Activated CD8-positive, alpha-beta T cell treated with anti-CD3 and anti-CD28 coated beads for 36 hours (primary cell): ENCODE measurements at regions of chr11 and their contacts with region 1.

Region 1: DNA sequence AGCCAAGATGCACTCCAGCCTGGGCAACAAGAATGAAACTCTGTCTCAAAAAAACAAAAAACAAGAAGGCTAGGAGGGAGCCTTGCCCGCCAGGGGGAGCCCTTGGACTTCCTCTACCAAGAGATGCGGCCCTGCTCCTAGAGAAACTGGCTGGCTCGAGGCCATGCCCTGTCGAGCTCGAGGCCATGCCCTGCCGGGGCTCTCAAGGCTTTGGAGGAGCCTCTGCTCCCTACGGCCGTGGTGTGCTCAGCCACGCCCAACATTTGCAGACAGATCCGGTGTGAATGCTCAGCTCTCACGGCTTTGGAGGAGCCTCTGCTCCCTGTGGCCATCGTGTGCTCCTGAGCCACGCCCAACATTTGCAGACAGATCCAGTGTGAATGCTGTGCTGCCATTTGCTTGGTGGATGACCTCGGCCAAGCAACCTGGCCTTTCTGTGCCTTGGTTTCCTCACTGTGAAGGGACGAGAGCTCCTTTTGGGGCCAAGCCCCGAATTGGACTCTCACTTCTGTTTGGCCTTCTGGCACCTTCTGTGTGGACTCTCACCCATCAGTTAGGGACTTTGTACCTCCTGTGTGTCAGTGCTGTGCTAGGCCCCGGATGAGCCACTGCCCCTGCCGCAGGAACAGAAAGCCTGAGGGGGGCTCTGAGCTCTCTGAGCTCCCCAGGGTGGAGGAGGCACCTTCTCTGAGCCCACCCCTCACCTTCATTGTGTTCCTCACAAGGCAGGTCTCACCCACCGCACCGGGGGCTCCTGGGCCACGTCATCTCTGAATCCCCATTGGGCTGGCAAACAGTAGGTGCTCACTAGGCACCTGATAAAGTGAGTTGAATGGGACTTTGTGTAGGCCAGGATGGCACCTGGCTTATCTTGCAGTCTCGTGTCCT is 14.1 kb downstream of the C11orf24 start:
- DNase-seq: peak; percentile 99
- ATAC-seq: peak; percentile 95
- H3K4me3 Mint-ChIP-seq: no peak overlapping the region
- H3K27ac Mint-ChIP-seq: no peak overlapping the region
- H3K4me1 Mint-ChIP-seq: peaks cover 3% of the 10 kb centered on the region
- H3K27me3 Mint-ChIP-seq: no peaks in the 10 kb centered on the region
- CTCF ChIP-seq: peak; percentile 84

Region 2: DNA sequence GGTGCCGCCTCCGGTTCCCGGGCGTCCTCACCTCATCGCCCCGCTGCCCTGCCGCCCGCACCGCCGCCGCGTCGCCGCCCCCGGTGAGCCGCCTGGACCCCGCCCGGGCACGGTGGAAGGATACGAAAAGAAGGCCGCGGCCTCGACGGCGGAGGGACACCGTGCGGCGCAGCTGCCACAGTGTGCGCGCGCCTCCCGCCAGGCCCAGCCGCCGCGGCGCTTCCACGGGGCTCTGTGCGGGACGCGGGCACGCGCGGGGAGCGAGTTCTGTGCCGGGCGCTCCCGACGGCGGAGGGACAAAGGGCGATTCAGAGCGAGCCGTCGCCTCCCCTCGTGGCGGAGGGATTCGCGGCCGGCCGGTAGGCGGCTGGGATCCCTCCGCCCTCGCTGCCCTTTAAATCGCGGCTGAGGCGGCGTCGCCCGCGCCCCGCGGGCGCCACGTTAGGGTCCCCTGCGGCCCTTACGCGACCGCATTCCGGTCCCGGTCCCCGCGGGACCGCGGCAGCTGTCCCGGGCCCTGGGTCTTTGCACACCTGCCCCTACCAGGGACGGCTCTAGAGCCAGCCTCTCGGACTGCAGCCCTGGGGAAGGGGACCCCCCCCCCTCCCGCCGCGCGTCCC is 44.1 kb before region 1 on chr11:
- CTCF ChIA-PET with region 1: no interaction called
- POLR2A ChIA-PET with region 1: no interaction called
- intact Hi-C with region 1: no loop called
- DNase-seq: peak; percentile 78
- ATAC-seq: peak; percentile 53
- H3K4me3 Mint-ChIP-seq: peak overlapping the region; percentile 55
- H3K27ac Mint-ChIP-seq: no peak overlapping the region
- H3K4me1 Mint-ChIP-seq: peaks cover 41% of the 10 kb centered on the region
- H3K27me3 Mint-ChIP-seq: peaks cover 9% of the 10 kb centered on the region
- CTCF ChIP-seq: no peak

Region 3: DNA sequence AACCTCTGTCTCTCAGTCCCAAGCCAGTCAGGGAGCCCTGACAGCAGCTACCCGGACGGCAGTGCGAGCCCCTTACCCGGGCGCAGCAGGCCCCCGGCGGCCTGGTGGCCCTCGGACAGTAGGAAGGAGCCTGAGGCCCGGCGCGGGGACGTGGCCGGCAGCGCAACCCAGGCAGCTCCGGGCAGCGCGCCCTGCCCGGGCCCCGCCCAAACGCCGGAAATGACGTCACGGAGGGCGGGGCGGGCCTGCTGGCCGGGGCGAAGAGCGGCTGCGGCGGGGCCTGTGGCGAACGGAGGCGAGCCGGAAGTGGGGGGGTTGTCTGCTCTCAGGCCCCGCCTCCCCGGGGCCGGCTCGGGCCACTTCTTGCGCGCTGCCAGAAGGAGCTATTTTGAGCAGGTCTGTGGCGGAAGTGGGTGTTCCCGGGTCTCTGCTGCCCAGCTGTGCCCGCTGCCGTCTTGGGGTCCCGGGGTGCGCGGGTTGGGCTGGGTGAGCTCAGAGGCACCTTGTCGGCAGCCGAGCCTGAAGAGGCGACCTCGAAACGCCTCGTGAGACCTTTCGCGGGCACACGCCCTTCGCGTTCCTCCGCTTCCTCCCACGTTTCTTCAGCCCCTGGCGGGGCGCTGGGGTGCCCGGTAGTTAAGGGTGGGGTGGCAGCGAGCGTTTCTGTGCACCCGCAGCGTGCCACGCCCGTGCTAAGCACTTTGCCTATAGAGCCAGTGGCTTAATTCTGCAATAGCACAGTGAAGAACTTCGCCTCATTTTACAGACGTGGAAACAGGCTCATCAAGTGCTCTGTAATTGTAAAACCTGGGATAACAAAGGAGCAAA is 14.3 kb after region 1 on chr11 and contains the start of gene C11orf24:
- CTCF ChIA-PET with region 1: interaction called, 28 read pairs
- POLR2A ChIA-PET with region 1: interaction called, 11 read pairs
- intact Hi-C with region 1: no loop called
- DNase-seq: peak; percentile 94
- ATAC-seq: peak; percentile 96
- H3K4me3 Mint-ChIP-seq: peak within 1 kb of the TSS; percentile 82
- H3K27ac Mint-ChIP-seq: peak within 1 kb of the TSS; percentile 90
- H3K4me1 Mint-ChIP-seq: peaks cover 29% of the 10 kb centered on the region
- H3K27me3 Mint-ChIP-seq: no peaks in the 10 kb centered on the region
- CTCF ChIP-seq: no peak
- total RNA-seq, gene C11orf24: 38.0 to 40.7 TPM

Region 4: DNA sequence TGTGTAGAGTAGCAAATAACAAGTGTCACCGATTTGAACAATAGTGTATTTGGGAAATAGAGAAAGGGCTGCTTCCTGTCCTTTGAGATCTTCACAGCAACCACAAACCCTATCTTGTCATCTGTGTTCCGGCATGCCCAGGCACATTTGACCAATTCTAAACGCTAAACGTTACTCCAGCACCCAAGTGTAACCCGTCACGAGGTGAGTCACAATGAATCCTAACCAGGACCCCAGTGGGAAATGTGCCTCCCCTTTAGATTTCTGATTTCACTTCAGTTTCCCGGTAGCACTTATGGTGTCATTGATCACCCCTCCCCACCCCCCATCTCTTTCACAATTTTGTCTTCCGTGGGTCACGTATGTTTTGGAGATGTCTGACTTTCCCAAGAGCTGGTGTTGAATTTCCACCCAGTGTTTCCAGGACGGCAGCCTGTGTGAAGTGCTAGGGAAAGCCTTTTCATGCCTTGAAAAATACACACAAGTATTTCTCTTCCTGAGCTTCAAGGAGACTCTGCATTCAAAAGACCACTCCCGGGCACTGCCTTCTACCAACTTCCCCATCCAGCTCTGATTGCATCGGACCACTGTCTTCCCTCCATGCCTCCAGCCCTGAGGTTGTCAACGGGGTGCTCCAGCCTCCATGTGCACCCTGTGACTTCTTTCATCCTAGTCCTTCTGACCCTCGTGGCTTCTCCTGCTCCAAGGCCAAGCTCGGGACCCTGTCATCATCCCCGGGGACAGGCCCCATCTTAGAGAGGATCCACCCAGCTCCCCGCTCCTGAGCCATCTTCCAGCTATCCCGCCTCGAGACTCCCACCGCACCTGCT is 24.6 kb after region 1 on chr11:
- CTCF ChIA-PET with region 1: interaction called, 13 read pairs
- POLR2A ChIA-PET with region 1: no interaction called
- intact Hi-C with region 1: no loop called
- DNase-seq: peak; percentile 79
- ATAC-seq: peak; percentile 95
- H3K4me3 Mint-ChIP-seq: peak overlapping the region; percentile 51
- H3K27ac Mint-ChIP-seq: peak overlapping the region; percentile 77
- H3K4me1 Mint-ChIP-seq: peaks cover 21% of the 10 kb centered on the region
- H3K27me3 Mint-ChIP-seq: peaks cover 5% of the 10 kb centered on the region
- CTCF ChIP-seq: no peak

Region 5: GRCh38 chr11:68287419-68287818 is 29.7 kb after region 1 on chr11:
- CTCF ChIA-PET with region 1: interaction called, 23 read pairs
- POLR2A ChIA-PET with region 1: interaction called, 3 read pairs
- intact Hi-C with region 1: no loop called
- DNase-seq: no peak
- ATAC-seq: no peak
- H3K4me3 Mint-ChIP-seq: no peak overlapping the region
- H3K27ac Mint-ChIP-seq: no peak overlapping the region
- H3K4me1 Mint-ChIP-seq: peaks cover 9% of the 10 kb centered on the region
- H3K27me3 Mint-ChIP-seq: peaks cover 7% of the 10 kb centered on the region
- CTCF ChIP-seq: no peak

Region 6: DNA sequence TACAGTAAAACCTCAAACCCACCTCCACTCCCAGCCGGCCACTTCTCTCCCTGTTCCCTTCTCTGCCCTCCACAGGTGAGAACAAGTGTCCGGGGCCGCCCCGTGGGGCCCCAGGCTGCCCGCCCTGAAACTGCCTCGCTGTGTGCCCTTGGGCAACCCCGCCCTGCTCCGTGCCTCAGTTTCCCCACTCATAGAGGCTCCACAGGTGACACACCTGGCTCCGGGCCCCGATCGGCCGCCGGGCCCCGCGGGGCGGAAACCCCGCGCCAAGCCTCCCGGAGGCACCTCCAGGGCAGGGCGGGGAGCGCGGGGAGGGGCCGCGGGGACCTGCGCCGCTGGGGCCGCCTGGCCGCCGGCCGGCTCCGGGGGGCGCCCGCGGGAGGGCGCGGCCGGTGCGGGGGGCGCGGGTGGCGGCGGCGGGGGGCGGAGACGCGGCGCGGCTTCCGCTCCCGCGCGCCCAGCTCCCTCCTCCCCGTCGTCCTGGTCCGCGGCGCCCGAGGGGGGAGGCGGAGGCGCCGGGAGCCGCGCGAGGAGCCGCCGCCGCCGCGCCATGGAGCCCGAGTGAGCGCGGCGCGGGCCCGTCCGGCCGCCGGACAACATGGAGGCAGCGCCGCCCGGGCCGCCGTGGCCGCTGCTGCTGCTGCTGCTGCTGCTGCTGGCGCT is 54.5 kb after region 1 on chr11 and contains the start of gene LRP5:
- CTCF ChIA-PET with region 1: interaction called, 15 read pairs
- POLR2A ChIA-PET with region 1: no interaction called
- intact Hi-C with region 1: no loop called
- DNase-seq: peak; percentile 27
- ATAC-seq: peak; percentile 56
- H3K4me3 Mint-ChIP-seq: peak within 1 kb of the TSS; percentile 92
- H3K27ac Mint-ChIP-seq: peak within 1 kb of the TSS; percentile 72
- H3K4me1 Mint-ChIP-seq: peaks cover 13% of the 10 kb centered on the region
- H3K27me3 Mint-ChIP-seq: peaks cover 2% of the 10 kb centered on the region
- CTCF ChIP-seq: no peak
- total RNA-seq, gene LRP5: 10.5 to 15.3 TPM

Region 7: DNA sequence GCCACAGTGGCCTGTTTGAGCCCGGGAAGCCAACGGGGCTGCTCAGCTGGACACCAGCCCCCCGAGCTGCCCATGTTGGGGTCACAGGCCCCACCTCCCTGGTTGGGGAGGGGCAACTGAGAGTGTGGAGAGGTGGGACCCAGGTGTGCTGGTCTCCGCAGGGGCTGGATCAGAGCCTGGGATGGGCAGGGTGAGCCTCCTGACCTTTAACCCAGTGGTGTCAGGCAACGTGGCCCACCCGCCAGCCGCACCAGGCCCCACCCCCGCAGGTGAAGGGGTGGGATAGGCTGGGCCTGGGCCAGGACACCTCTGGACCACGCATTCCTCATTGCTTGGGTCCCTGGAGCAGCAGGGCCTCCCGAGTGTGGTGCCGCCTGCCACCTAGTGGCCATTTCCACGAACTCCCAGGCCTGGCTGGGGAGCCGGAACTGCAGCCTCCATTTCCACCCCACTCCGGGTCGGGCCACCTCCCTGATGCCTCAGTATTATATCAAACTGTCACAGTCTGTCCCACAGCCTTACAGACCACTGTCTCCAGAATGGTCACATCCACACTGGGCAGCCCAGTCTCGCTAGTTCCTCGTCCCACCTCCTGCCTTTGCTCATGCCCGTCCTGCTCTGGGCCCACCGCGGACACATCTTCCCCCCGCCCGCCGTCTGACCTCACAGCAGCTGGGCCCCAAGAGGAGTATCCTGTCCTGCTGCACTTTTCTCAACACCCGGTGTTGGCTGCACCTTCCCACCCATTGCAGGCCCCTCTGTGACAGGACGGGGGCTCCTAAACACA is 189.5 kb after region 1 on chr11:
- CTCF ChIA-PET with region 1: no interaction called
- POLR2A ChIA-PET with region 1: no interaction called
- intact Hi-C with region 1: loop called (anchors 10 kb)
- DNase-seq: peak; percentile 82
- ATAC-seq: peak; percentile 98
- H3K4me3 Mint-ChIP-seq: no peak overlapping the region
- H3K27ac Mint-ChIP-seq: no peak overlapping the region
- H3K4me1 Mint-ChIP-seq: peaks cover 7% of the 10 kb centered on the region
- H3K27me3 Mint-ChIP-seq: no peaks in the 10 kb centered on the region
- CTCF ChIP-seq: peak; percentile 96